ENCODE measurements at regions of chr3 and their contacts with region 1.

Region 1: GRCh38 chr3:178845420-178846118 is 226.0 kb downstream of the ZMAT3 start:
- DNase-seq: no peak
- ATAC-seq: no peak
- H3K4me3 ChIP-seq: no peak overlapping the region
- H3K27ac ChIP-seq: peak overlapping the region in 1 of 10 donors; percentile 78
- H3K4me1 ChIP-seq: peaks cover 3 to 50% (median 25%) of the 10 kb centered on the region in 9 donors
- H3K27me3 ChIP-seq: no peaks in the 10 kb centered on the region
- CTCF ChIP-seq: no peak

Region 2: DNA sequence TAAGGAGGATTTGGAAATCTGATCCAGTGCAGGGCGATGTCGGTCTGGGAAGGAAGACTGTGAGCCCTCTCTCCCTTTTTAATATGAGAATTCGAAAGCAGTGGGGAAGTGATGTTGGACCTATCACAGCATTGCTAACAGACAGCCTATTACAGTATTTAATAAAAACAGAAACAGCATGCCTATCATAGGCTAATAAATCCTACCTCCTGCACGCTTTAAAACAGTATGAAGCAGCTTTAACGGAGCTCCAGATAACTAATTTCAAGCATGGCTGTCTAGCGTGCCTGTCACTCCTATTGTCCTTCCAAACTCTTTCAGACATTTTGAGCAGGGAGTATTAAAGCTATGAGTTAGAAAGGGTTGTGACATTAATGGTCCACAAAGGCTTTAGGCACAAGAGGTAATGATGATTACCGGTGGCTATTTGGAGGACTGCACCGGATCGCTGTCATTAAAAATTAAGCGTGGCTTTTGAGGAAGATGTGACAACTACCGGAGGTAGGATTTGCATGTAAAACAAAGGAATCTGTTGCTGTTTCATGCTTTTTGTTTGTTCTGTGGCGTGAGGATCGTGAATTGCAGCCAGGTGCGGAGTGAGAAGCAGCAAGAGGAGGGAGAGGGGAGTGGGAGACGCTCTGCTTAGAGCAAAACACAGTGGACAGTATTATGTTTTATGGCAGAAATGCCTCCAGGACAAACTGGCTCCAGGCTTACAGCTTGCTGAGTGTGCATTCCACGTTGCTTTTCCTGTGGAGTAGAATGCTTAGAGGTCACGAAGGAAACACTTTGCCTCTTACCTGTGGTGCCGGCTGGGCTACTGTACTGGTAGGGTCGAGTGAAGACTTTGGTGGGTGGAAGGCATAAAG is 309.1 kb before region 1 on chr3 and contains the start of gene KCNMB2:
- intact Hi-C with region 1: loop called in 1 of 10 experiments (anchors 5 kb)
- DNase-seq: peak in 1 of 2 donors; percentile 8
- ATAC-seq: peak; percentile 62 to 88 (median 84)
- H3K4me3 ChIP-seq: peak within 1 kb of the TSS; percentile 25 to 63 (median 54)
- H3K27ac ChIP-seq: peak within 1 kb of the TSS in 8 of 10 donors; percentile 28 to 70 (median 52)
- H3K4me1 ChIP-seq: peaks cover 0 to 10% (median 0%) of the 10 kb centered on the region in 9 donors
- H3K27me3 ChIP-seq: no peaks in the 10 kb centered on the region
- CTCF ChIP-seq: no peak
- total RNA-seq, gene KCNMB2: 1.5 to 9.2 (median 4.2) TPM

Region 3: DNA sequence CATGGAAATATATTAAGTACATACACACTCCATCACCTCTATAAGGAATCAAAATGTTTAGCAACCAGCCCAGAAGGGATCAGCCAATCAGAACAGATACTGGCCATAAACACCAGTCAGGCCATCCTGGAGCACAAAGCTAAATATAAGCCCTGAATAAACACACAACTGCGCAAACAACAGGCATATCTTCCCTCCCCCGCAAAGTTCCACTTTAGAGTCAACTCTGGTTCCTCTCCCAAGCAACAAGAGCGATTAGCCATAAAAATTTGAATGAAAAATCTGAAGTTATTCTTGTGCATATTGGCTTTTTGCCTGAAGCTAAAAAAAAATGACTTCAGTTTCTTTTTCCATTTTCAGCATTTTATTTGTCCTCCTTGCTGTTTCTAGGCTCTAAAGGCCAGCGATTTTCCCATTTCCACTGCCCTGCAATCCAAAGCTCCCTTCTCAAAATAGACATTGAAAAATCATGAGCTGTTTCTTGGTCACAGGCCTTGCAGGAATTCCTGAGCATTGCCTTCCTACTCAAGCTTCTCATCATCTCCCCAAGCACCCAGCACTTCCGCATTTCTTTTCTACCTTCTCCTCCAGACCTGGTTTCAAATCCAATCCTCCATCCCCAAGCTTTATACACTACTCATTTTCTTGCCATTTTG is 21.9 kb before region 1 on chr3:
- intact Hi-C with region 1: loop called in 1 of 10 experiments (anchors 2 kb)
- DNase-seq: peak in 1 of 2 donors; percentile 47
- ATAC-seq: peak in 7 of 8 donors; percentile 62 to 93 (median 80)
- H3K4me3 ChIP-seq: no peak overlapping the region
- H3K27ac ChIP-seq: peak overlapping the region; percentile 4 to 76 (median 56)
- H3K4me1 ChIP-seq: peaks cover 3 to 34% (median 12%) of the 10 kb centered on the region in 9 donors
- H3K27me3 ChIP-seq: no peaks in the 10 kb centered on the region
- CTCF ChIP-seq: no peak